ENCODE measurements at regions of chr1 and their contacts with region 1.

Region 1: GRCh38 chr1:194279975-194280374 is 1093.6 kb upstream of the B3GALT2 start:
- DNase-seq: no peak
- ATAC-seq: no peak
- H3K4me3 ChIP-seq: no peak overlapping the region
- H3K4me3 Mint-ChIP-seq: no peak overlapping the region
- H3K27ac ChIP-seq: no peak overlapping the region
- H3K27ac Mint-ChIP-seq: no peak overlapping the region
- H3K4me1 ChIP-seq: no peaks in the 10 kb centered on the region
- H3K4me1 Mint-ChIP-seq: peaks cover 12% of the 10 kb centered on the region
- H3K27me3 ChIP-seq: no peaks in the 10 kb centered on the region
- H3K27me3 Mint-ChIP-seq: no peaks in the 10 kb centered on the region
- CTCF ChIP-seq: no peak

Region 2: DNA sequence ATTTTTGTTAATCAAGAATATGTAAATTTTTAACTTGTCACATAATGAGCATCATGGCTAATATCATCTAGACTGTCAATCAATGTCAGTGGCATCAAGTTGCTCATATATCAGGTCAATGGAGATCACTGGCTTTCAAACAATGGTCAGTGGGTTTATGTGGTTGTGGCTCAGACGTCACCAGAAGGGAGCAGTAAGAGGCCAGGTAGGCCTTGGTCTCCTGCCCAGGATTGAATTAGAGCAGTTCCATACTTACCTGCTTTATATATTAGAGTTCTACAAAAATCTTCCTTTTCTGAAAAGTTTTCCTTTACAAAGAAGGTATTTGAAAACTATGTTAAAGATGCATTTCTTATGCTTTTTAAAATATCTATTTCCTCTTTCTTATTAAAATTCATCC is 887.3 kb before region 1 on chr1:
- CTCF ChIA-PET with region 1: no interaction called
- POLR2A ChIA-PET with region 1: no interaction called
- intact Hi-C with region 1: loop called in 1 of 2 experiments (anchors 5 kb)
- DNase-seq: no peak
- ATAC-seq: no peak
- H3K4me3 ChIP-seq: no peak overlapping the region
- H3K4me3 Mint-ChIP-seq: no peak overlapping the region
- H3K27ac ChIP-seq: no peak overlapping the region
- H3K27ac Mint-ChIP-seq: no peak overlapping the region
- H3K4me1 ChIP-seq: no peaks in the 10 kb centered on the region
- H3K4me1 Mint-ChIP-seq: no peaks in the 10 kb centered on the region
- H3K27me3 ChIP-seq: no peaks in the 10 kb centered on the region
- H3K27me3 Mint-ChIP-seq: no peaks in the 10 kb centered on the region
- CTCF ChIP-seq: no peak